ENCODE measurements at regions of chr1 and their contacts with region 1.

Region 1: DNA sequence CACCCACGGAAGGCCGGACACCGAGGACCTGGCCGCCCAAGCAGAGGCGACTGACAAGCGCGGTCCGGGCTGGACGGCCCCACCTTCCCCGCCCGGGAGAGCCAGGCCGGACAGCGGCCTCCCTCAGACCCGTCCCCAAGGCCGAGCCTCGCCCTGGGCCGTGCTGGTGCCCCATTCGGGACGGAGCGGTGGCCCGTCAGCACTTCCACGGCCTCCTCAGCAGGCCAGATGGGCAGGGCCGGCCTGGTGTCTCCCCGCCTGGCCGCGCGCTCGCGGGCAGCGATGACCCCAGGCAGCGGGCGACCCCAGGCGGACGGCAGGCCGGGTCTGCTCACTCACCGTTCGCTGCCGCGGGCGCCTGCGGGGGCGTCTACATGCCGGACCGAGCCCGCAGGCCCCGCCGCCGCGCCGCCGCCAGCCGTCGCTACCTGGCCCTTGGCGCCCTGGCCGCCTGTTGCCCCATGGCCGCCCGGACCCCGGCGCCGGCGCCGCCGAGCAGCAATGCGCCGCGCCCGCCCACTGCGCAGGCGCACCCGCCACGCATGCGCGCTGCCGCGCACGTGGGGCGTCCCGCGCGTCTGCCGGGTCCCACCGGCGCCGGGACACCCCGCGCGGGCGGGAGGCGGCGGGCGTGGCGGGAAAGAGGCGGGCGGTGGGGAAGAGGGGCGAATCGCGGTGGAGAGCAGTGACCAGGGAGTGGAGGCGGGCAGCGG is at the start of gene NADK:
- DNase-seq: peak in 36 of 42 donors; percentile 19 to 86 (median 66)

Region 2: DNA sequence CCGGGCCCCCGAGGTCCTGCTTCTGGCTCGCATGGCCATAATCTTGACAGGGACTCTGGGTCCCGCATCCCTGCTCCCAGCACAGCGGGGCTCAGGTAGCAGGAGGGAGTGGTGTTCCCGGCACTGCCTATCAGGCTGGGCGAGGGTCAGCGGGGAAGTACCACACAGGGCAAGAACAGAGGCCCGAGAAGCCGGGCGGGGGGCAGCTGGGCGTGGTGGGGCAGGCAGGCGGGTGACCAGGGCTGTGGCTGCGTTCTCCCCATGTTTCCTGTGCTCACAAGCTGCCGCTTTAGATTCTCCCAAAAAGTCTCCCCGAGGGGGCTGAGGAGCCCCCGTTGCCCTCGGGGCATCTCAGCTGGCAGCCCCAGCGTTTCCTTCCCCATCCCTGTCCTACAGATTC is 288.2 kb before region 1 on chr1:
- intact Hi-C with region 1: no loop called
- DNase-seq: no peak

Region 3: DNA sequence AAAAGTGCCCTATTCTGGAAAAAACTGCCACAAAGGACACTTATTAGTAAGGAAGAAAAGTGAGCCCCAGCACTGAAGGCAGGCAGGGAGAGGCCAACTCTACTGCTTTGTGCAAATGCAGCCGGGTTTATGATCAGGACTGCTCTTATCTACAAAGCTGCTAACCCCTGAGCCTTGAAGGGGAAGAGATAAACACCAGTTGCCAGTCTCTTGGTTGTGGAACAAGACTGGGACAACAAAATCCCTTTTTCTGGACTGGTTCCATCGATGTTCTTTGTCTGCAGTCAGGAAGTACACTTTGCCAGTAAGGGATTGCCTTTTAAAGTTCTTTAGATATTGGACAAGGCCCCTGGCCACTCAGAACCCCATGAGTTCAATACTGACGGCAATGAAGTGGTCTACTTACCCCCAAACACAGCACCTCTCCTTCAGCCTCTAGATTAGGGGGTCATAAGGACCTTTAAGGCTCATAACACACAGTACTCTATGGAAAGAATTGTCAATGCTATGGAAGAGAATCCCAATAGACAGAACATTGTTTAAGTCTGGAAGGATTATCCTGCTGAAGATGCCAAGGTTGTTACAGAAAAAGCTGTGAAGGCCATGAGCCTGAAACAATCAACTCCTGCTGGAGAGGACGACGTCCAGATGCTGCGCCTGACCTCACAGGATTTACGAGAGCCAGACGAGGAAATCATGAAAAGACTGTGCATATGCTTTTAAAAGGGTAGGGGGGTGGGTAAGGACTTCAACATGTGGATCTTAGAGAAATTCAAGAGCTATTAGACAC is 69.2 kb after region 1 on chr1:
- intact Hi-C with region 1: no loop called
- DNase-seq: peak in 1 of 42 donors; percentile 8

Region 4: GRCh38 chr1:1890506-1891348 is 112.6 kb after region 1 on chr1 and contains the start of gene GNB1:
- intact Hi-C with region 1: loop called (anchors 5 kb)
- DNase-seq: peak; percentile 53 to 93 (median 86)

Region 5: GRCh38 chr1:1906185-1907097 is 128.3 kb after region 1 on chr1:
- intact Hi-C with region 1: loop called (anchors 5 kb)
- DNase-seq: peak; percentile 68 to 96 (median 88)

Region 6: GRCh38 chr1:2098855-2099721 is 321.0 kb after region 1 on chr1:
- intact Hi-C with region 1: no loop called
- DNase-seq: peak; percentile 64 to 95 (median 88)

Measured in head of caudate nucleus (tissue), 42 donors.